ENCODE measurements at regions of chr2 and their contacts with region 1.

Region 1: GRCh38 chr2:23384551-23385349 is at the start of gene KLHL29:
- DNase-seq: peak; percentile 89
- total RNA-seq, gene KLHL29: 1.6 TPM

Region 2: GRCh38 chr2:23055251-23055650 is 329.5 kb before region 1 on chr2:
- intact Hi-C with region 1: no loop called
- DNase-seq: no peak

Region 3: GRCh38 chr2:23566236-23567142 is 181.7 kb after region 1 on chr2:
- intact Hi-C with region 1: loop called (anchors 10 kb)
- DNase-seq: no peak

Region 4: GRCh38 chr2:23760736-23761135 is 376.0 kb after region 1 on chr2:
- intact Hi-C with region 1: loop called (anchors 10 kb)
- DNase-seq: no peak

Measured in cardiac septum (tissue), 1 donor.